A673 (cell line): ENCODE measurements at regions of chr1 and their contacts with region 1.

Region 1: GRCh38 chr1:64823691-64824476 is 79.0 kb downstream of the RAVER2 start:
- DNase-seq: peak; percentile 94
- H3K4me3 ChIP-seq: no peak overlapping the region
- H3K27ac ChIP-seq: peak overlapping the region; percentile 50
- H3K4me1 ChIP-seq: peaks cover 42% of the 10 kb centered on the region
- H3K27me3 ChIP-seq: no peaks in the 10 kb centered on the region
- CTCF ChIP-seq: peak; percentile 93

Region 2: GRCh38 chr1:64242895-64243756 is 580.8 kb before region 1 on chr1:
- CTCF ChIA-PET with region 1: interaction called, 14 read pairs
- POLR2A ChIA-PET with region 1: interaction called, 5 read pairs
- intact Hi-C with region 1: no loop called
- DNase-seq: peak; percentile 75
- H3K4me3 ChIP-seq: peak overlapping the region; percentile 16
- H3K27ac ChIP-seq: peak overlapping the region; percentile 72
- H3K4me1 ChIP-seq: peaks cover 48% of the 10 kb centered on the region
- H3K27me3 ChIP-seq: no peaks in the 10 kb centered on the region
- CTCF ChIP-seq: peak; percentile 72

Region 3: GRCh38 chr1:64363111-64363510 is 460.8 kb before region 1 on chr1:
- CTCF ChIA-PET with region 1: no interaction called
- POLR2A ChIA-PET with region 1: no interaction called
- intact Hi-C with region 1: loop called (anchors 2 kb)
- DNase-seq: peak; percentile 90
- H3K4me3 ChIP-seq: no peak overlapping the region
- H3K27ac ChIP-seq: peak overlapping the region; percentile 99
- H3K4me1 ChIP-seq: peaks cover 50% of the 10 kb centered on the region
- H3K27me3 ChIP-seq: no peaks in the 10 kb centered on the region
- CTCF ChIP-seq: no peak

Region 4: DNA sequence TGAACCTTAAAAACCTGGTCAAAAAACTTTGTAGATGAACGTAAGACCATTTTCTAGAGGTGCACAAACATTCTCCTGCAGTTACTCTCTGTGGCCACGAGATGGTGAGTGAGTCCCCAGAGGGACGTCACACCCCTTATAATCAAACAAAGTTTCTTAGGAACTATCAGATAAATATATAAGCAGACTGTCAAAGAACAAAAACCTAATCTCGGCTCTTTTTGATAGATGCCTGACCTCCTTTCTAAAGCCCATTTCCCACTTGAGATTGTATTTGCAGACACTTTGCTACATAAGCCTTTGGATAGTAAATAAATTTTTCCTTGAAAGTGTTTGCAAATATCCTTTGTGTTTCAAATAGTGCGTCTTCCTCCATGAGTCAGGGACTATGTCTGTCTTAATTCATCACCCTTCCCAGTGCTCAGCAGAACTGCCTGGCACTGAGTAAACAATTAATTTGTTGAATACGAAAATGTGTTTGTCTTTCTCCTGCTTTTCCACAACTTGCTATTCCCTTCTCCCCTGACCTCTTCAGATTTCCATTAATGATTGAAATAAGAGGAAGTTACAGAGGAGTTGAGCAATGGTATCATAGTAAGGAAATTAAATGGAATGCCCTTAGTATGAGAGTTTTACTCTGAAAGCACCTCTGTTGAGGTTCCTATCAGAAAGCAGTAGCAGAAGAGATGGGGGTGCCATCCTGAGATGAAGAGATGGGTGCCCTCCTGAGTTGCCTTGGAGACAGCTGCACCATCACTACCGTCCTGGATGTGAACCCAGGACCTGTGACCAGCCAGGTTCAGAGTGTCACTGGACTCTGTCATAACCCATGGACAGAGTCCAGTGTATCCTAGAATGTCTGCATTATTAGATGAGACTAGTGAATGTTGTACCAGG is 136.8 kb before region 1 on chr1:
- CTCF ChIA-PET with region 1: no interaction called
- POLR2A ChIA-PET with region 1: no interaction called
- intact Hi-C with region 1: loop called (anchors 2 kb)
- DNase-seq: peak; percentile 81
- H3K4me3 ChIP-seq: no peak overlapping the region
- H3K27ac ChIP-seq: peak overlapping the region; percentile 45
- H3K4me1 ChIP-seq: peaks cover 32% of the 10 kb centered on the region
- H3K27me3 ChIP-seq: no peaks in the 10 kb centered on the region
- CTCF ChIP-seq: peak; percentile 92

Region 5: DNA sequence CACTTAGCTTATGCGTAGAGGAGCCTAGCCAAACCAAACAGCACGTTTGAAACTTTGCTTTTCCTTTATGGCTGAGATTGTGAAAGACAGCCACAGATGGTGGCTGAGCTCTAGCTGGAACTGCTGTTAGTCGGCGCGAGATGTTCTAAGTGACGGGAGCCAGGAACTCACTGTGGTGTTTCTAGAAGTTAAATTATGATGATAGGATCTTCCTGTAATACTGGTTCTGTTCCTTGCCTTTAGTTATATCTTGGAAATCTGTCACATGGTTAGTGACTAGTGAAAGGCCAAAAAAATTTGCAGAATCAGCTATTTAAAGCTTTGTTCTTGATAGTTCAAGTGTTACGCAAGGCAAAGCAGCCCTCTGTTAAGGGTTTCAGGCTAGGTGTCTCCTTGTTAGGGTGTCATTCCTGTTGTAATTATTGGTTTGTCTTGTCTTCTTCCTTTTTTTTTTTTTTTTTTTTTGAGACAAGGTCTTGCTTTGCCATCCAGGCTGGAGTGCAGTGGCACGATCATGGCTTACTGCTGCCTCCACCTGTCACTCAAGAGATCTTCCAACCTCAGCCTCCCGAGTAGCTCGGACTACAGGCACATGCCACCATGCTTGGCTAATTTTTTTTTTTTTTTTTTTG is 346.7 kb after region 1 on chr1:
- CTCF ChIA-PET with region 1: interaction called, 10 read pairs
- POLR2A ChIA-PET with region 1: interaction called, 15 read pairs
- intact Hi-C with region 1: no loop called
- DNase-seq: no peak
- H3K4me3 ChIP-seq: no peak overlapping the region
- H3K27ac ChIP-seq: no peak overlapping the region
- H3K4me1 ChIP-seq: peaks cover 3% of the 10 kb centered on the region
- H3K27me3 ChIP-seq: no peaks in the 10 kb centered on the region
- CTCF ChIP-seq: no peak